ENCODE measurements at regions of chr10 and their contacts with region 1.

Region 1: GRCh38 chr10:45249978-45250693 is 65.3 kb downstream of the OR13A1 start:
- DNase-seq: peak; percentile 43
- CTCF ChIP-seq: peak; percentile 23

Region 2: DNA sequence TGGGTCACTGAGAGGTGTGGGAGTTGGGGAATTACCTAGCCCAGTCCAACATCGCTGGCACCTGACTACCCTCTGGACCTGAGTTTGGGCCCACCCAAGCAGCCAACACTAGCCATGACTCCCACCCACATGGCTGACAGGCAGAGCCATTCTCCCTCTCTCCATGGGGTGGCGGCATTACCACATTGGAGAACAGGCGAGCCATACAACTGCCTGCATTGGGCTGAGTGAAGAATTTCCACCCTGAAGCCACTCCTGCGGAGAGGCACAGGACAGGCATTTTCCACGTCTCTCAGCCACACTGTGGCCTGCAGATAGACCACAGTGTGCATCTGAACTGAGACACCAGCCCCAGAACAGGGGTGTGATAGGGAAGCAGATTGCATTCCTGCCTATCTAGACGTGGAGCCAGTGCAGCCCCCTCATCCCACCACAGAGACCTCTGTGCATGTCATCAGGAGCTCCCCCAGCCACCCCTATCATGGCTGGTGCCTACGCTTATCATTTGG is 978.5 kb after region 1 on chr10:
- in situ Hi-C with region 1: loop called (anchors 25 kb)
- DNase-seq: peak; percentile 83
- CTCF ChIP-seq: peak; percentile 89

Measured in GM13976 (cell line).